ENCODE measurements at regions of chr3 and their contacts with region 1.

Region 1: GRCh38 chr3:27484015-27484844 is at the start of gene SLC4A7:
- DNase-seq: peak; percentile 99
- H3K4me3 Mint-ChIP-seq: peak within 1 kb of the TSS; percentile 100
- H3K27ac Mint-ChIP-seq: peak within 1 kb of the TSS; percentile 98
- H3K4me1 Mint-ChIP-seq: peaks cover 36% of the 10 kb centered on the region
- H3K27me3 Mint-ChIP-seq: no peaks in the 10 kb centered on the region
- total RNA-seq, gene SLC4A7: 74.7 to 75.5 TPM

Region 2: GRCh38 chr3:27467545-27467944 is 16.7 kb before region 1 on chr3:
- CTCF ChIA-PET with region 1: interaction called, 11 read pairs
- POLR2A ChIA-PET with region 1: interaction called, 8 read pairs
- DNase-seq: no peak
- H3K4me3 Mint-ChIP-seq: no peak overlapping the region
- H3K27ac Mint-ChIP-seq: no peak overlapping the region
- H3K4me1 Mint-ChIP-seq: peaks cover 17% of the 10 kb centered on the region
- H3K27me3 Mint-ChIP-seq: no peaks in the 10 kb centered on the region

Region 3: DNA sequence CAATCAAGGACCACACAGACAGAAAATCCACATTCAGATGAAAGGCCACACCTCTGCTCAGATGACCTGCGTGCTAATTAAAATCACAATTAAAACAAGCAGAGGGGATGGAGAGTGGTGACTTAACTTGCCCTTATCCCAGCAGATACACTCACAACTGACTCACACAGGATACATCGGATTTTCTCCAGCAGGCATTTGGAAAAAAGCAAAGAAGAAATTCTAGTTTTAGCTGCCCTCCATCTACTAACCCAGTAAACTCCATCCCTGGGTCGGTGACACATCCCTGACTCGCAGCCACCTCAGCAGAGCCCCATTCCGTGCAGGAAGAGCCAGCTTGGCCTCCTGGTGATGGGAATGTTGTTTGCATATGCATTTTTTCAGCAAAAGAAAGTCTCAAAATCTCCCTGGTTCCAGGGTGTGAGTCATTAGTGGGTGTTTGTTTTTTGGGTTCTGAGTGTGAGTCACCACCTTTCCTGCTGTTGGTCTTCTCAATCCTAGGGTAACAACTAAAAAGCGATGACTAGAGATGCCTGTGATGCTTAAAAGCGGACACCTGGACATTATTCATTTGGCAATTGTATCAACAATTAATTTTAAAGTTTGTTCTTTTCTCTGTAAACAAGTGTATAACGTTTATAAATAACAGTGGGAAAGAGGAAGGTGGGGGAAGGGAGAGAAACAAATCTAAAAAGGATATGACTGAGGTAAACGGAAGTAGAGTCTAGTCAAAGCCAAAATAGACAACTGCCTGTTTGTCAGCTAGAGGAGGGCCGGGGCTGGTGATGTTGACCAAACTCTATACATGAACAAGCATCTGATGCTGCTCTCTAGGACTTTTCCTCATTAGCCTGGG is 49.7 kb after region 1 on chr3:
- CTCF ChIA-PET with region 1: no interaction called
- POLR2A ChIA-PET with region 1: interaction called, 13 read pairs
- DNase-seq: peak; percentile 69
- H3K4me3 Mint-ChIP-seq: peak overlapping the region; percentile 40
- H3K27ac Mint-ChIP-seq: peak overlapping the region; percentile 95
- H3K4me1 Mint-ChIP-seq: peaks cover 34% of the 10 kb centered on the region
- H3K27me3 Mint-ChIP-seq: no peaks in the 10 kb centered on the region

Region 4: DNA sequence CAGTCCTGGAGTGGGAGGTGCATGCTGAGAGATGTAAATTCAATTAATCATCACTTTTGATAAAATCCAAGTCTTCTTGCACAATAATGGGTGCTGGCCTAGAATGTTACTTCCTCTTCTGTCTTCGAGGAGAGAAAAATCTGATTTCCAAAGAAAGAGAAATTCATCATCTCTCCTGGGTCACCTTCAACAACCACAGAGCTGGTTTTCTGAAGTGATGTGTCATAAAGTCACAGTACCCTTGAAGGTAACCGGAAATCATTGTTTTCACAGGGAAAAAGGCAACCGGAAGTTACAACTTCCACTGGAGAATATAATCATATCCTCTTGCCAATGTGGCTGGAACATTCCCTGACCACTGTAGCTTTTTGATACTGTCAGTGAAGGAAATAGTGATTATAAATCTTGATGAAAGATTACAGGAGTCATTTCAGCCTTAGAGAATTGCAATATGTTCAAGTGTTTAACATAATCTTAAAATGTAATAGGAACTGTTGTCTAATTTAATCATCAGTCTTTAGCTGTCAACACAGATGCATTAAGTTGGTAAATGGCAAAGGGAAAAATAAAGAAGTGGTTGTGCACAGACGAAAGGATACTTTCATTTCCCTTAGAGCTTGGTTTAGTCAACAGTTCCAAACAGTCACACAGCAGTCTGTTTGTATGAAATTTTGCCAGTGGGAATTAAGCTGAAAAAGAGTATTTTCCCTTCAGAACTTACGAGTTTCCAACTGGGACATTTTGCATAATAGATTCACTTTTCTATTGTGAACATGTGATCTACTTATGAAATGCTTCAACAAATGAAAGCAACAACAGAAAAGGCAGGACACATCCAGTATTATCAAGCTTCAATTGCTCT is 106.4 kb after region 1 on chr3:
- CTCF ChIA-PET with region 1: interaction called, 4 read pairs
- POLR2A ChIA-PET with region 1: interaction called, 20 read pairs
- DNase-seq: no peak
- H3K4me3 Mint-ChIP-seq: no peak overlapping the region
- H3K27ac Mint-ChIP-seq: peak overlapping the region; percentile 86
- H3K4me1 Mint-ChIP-seq: peaks cover 38% of the 10 kb centered on the region
- H3K27me3 Mint-ChIP-seq: no peaks in the 10 kb centered on the region

Region 5: DNA sequence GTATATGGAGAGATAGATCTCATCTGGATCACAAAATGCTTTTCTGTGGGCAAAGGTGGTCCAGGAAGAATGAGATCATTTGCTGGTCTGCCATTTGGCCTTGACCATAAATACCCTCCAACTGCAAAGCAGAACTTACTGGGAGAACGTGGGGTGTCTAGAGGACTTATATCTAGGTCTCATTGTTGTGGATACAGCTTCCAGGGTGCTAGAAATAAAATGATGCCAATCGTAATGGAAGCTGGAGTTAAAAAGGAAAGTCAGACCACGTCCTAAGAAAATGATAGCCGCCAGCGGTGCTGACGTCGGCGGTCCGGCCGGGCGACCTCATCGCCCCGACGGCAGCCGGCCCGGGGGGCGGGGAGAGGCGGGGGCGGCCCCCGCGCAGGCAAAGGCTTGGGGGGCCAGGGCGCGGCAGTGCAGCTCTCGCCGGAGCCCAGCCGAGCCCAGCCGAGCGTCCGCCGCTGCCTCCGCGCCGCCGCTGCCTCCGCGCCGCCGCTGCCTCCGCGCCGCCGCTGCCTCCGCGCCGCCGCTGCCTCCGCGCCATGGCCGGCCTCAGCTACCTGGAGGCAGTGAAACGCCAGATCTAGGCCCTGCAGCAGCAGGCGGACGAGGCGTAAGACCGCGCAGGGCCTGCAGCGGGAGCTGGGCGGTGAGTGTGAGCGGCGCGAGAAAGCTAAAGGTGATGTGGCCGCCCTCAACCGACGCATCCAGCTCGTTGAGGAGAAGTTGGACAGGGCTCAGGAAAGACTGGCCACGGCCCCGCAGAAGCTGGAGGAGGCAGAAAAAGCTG is 148.4 kb after region 1 on chr3:
- CTCF ChIA-PET with region 1: interaction called, 7 read pairs
- POLR2A ChIA-PET with region 1: interaction called, 30 read pairs
- DNase-seq: peak; percentile 51
- H3K4me3 Mint-ChIP-seq: peak overlapping the region; percentile 81
- H3K27ac Mint-ChIP-seq: peak overlapping the region; percentile 89
- H3K4me1 Mint-ChIP-seq: peaks cover 50% of the 10 kb centered on the region
- H3K27me3 Mint-ChIP-seq: no peaks in the 10 kb centered on the region

Measured in activated CD4-positive, alpha-beta memory T cell treated with anti-CD3 and anti-CD28 coated beads, Interleukin-2, amount 10 ng/mL, durations not matched to agents 7 days and 5 days (primary cell).